Activated naive CD4-positive, alpha-beta T cell treated with anti-CD3 and anti-CD28 coated beads, Interleukin-2, amount 10 ng/mL, durations not matched to agents 7 days and 5 days (primary cell): ENCODE measurements at regions of chr14 and their contacts with region 1.

Region 1: GRCh38 chr14:57182760-57183503 is 85.8 kb downstream of the EXOC5 start:
- DNase-seq: no peak
- H3K4me3 Mint-ChIP-seq: no peak overlapping the region
- H3K27ac Mint-ChIP-seq: no peak overlapping the region
- H3K4me1 Mint-ChIP-seq: no peaks in the 10 kb centered on the region
- H3K27me3 Mint-ChIP-seq: peaks cover 9% of the 10 kb centered on the region

Region 2: DNA sequence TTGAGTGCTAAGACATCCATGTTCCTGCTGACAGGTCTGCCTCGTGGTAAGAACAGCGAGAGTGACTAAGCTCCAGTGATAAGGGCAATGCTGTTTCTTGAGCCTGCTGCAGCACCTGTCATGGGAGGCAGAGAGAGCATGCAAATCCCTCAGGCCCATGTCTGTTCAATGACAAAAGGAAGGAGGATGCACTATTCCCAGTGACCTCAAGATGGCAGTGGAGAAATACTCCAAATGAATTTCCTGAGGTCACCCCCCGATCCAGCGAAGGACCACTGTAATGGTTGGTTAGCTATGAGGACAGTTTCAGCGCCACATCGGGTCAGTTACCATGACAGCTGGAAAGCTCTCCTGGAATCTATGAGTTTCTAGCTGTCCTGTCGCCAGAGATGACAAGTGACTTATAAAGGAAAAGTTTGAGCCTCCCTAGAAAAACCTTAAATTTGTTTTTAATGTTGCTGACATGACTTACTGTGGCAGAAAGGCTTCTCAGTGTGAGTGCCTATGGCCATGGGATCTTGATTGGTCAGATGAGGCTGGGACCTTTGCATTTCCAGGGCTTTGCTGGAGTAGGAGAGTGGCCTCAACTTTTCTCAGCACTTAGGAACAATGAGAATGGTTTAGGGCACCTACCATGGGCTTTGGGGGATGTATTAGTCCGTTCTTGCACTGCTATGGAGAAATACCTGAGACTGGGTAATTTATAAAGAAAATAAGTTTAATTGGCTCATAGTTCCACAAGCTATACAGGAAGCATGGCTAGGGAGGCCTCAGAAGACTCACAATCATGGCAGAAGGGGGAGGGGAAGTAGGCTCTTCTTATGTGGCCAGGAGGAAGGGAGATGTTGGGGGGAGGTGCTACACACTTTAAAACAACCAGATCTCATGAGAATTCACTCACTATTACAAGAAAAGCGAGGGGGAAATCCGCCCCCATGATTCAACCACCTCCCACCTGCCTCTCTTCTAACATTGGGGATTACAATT is 691.3 kb before region 1 on chr14:
- CTCF ChIA-PET with region 1: interaction called, 12 read pairs
- DNase-seq: peak; percentile 40
- H3K4me3 Mint-ChIP-seq: no peak overlapping the region
- H3K27ac Mint-ChIP-seq: no peak overlapping the region
- H3K4me1 Mint-ChIP-seq: peaks cover 2% of the 10 kb centered on the region
- H3K27me3 Mint-ChIP-seq: no peaks in the 10 kb centered on the region

Region 3: GRCh38 chr14:57161583-57162234 is 21.2 kb before region 1 on chr14:
- CTCF ChIA-PET with region 1: no interaction called
- DNase-seq: no peak
- H3K4me3 Mint-ChIP-seq: no peak overlapping the region
- H3K27ac Mint-ChIP-seq: no peak overlapping the region
- H3K4me1 Mint-ChIP-seq: no peaks in the 10 kb centered on the region
- H3K27me3 Mint-ChIP-seq: no peaks in the 10 kb centered on the region

Region 4: DNA sequence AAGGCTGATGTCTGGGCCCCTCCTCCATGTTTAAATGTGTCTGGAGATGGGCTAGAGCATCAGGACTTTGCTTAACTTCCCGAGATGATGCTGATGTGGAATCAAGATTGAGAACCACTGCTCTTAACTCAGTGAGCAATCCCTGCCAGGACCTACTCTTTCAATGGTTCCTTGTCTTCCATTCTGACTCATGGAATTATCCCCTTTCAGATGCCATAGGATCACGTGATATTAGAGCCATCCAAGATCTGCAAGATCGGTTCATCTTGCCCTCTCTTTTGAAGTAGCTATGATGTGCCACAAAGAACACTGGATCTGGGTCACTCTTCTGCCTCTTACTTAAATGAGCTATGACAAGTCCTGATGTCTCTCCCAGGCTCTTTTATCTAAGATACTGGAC is 11.0 kb before region 1 on chr14:
- CTCF ChIA-PET with region 1: no interaction called
- DNase-seq: no peak
- H3K4me3 Mint-ChIP-seq: no peak overlapping the region
- H3K27ac Mint-ChIP-seq: no peak overlapping the region
- H3K4me1 Mint-ChIP-seq: no peaks in the 10 kb centered on the region
- H3K27me3 Mint-ChIP-seq: peaks cover 5% of the 10 kb centered on the region

Region 5: GRCh38 chr14:57293866-57294837 is 111.2 kb after region 1 on chr14:
- CTCF ChIA-PET with region 1: no interaction called
- DNase-seq: no peak
- H3K4me3 Mint-ChIP-seq: no peak overlapping the region
- H3K27ac Mint-ChIP-seq: no peak overlapping the region
- H3K4me1 Mint-ChIP-seq: no peaks in the 10 kb centered on the region
- H3K27me3 Mint-ChIP-seq: no peaks in the 10 kb centered on the region